Adrenal gland (tissue), 19 donors: ENCODE measurements at regions of chr11 and their contacts with region 1.

Region 1: DNA sequence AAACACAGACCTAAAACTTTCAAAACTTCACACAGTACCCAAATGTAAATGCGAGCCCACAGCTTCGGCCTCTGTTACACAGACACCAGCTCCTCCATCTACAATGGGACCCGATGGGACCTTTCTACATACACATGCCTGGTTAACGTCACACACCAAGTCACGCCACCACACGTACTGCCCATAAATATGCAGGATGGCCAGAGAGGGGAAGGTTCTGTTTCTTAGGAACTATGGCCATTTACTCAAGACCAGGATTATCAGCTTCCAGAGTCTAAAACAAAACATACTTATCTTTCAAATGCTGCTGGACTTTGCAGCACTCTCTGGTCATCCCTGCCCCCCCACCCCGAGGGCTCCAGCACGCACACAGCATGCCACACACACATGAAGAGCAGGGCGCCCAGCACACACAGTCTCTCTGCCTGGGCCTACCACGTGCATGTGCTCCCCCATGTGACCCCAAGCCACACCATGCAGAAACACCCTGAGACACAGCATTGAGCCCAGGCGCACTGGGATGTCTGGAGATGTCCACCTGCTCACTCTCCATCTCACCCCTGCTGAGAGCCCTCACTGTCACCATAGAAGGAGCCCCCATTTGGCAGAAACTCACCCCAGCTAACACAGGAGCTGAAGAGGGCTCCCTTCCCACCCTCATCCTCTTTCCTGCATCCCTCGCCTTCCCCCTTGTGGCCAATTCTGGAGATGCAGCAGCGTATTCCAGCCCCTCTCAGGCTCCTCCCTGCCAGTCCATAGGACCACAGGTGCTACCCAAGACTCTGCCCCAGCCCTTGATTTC is 61.8 kb downstream of the SLC22A12 start:
- DNase-seq: peak; percentile 69 to 90 (median 82)
- H3K4me3 ChIP-seq: no peak overlapping the region
- H3K27ac ChIP-seq: no peak overlapping the region
- H3K4me1 ChIP-seq: no peaks in the 10 kb centered on the region
- H3K27me3 ChIP-seq: no peaks in the 10 kb centered on the region
- CTCF ChIP-seq: peak; percentile 86 to 96 (median 92)
- POLR2A ChIP-seq: no peak

Region 2: DNA sequence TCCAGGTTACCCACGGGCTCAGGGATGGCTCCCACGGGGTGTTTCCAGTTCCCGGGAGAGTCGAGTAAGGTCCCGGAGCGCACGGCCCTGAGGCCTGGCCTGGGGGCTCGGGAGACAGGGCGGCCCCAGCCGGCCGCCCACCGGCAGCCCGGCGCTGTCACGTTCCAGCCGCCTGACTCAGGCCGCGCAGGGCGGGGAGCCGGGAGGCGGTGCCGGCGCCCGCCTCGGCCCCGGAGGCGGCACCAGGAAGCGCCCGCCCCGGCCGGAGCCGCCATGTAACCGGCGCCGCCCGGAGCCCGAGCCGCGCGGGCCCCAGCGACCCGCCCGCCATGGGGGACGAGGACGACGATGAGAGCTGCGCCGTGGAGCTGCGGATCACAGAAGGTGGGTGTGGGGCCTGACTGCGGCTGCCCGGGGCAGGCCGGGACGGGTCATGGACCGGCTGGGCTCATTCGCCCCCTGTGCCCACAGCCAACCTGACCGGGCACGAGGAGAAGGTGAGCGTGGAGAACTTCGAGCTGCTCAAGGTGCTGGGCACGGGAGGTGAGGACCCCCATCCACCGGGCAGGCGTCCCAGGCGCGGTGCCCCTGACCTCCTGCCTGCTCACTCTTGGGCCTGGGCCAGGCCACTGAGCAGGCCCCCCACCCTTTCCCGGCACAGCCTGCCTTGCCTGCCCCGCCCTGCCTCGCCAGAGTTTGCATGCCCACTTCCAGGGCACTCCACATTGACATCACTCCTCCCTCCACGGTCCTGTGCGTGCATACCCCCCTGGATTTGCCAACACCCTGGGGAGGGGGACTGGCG is 293.7 kb before region 1 on chr11 and contains the start of gene RPS6KA4:
- intact Hi-C with region 1: loop called (anchors 10 kb)
- DNase-seq: peak in 4 of 7 donors; percentile 58 to 68 (median 64)
- H3K4me3 ChIP-seq: peak within 1 kb of the TSS; percentile 5 to 97 (median 50)
- H3K27ac ChIP-seq: peak within 1 kb of the TSS; percentile 13 to 88 (median 82)
- H3K4me1 ChIP-seq: peaks cover 14 to 35% of the 10 kb centered on the region in 2 donors
- H3K27me3 ChIP-seq: no peaks in the 10 kb centered on the region
- CTCF ChIP-seq: peak in 1 of 6 experiments; percentile 17
- POLR2A ChIP-seq: peak; percentile 21 to 70
- total RNA-seq, gene RPS6KA4: 13.4 to 89.3 (median 26.3) TPM

Region 3: GRCh38 chr11:64448599-64449556 is 203.9 kb before region 1 on chr11:
- intact Hi-C with region 1: loop called in 1 of 2 experiments (anchors 10 kb)
- DNase-seq: peak; percentile 81 to 90 (median 86)
- H3K4me3 ChIP-seq: peak overlapping the region in 1 of 4 donors; percentile 39
- H3K27ac ChIP-seq: peak overlapping the region in 2 of 5 donors; percentile 48 to 74
- H3K4me1 ChIP-seq: peaks cover 3 to 17% of the 10 kb centered on the region in 2 donors
- H3K27me3 ChIP-seq: no peaks in the 10 kb centered on the region
- CTCF ChIP-seq: peak; percentile 66 to 85 (median 76)
- POLR2A ChIP-seq: no peak

Region 4: GRCh38 chr11:64489831-64490441 is 162.9 kb before region 1 on chr11:
- intact Hi-C with region 1: loop called (anchors 2 to 10 kb)
- DNase-seq: peak; percentile 66 to 77 (median 72)
- H3K4me3 ChIP-seq: no peak overlapping the region
- H3K27ac ChIP-seq: no peak overlapping the region
- H3K4me1 ChIP-seq: no peaks in the 10 kb centered on the region
- H3K27me3 ChIP-seq: peaks cover 21% of the 10 kb centered on the region
- CTCF ChIP-seq: peak; percentile 36 to 76 (median 58)
- POLR2A ChIP-seq: no peak

Region 5: DNA sequence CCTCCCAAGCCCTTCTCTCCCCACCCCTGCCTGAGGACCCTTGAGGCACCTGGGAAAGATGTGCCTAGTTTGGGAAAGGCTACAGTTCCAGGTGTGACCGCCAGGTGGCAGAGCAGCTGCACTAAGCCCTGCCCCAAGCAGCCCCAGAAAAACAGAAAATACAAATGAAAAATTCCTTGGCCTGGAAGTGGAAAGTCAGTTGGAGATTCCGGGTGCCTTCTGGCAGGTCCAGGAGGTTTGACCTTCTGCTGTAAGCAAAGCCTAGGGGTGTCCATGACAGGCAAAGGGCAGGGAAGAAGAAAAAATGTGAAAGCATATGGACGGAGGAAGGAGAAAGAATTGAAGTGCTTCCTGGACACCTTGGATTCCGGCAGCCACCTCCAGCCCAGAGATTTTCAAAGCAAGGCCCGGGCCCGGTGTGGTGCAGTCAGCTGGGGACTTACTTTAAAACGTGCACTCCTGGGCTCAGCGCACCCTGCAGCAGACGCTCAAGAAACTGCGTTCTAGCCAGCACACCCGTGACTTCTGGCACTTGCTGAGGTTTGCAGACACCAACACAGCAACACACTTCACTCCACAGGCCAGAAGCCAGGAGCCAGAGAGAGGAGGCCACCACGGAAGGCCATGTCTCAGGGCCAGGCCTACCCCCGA is 99.1 kb before region 1 on chr11:
- intact Hi-C with region 1: loop called (anchors 2 kb)
- DNase-seq: peak; percentile 40 to 86 (median 75)
- H3K4me3 ChIP-seq: no peak overlapping the region
- H3K27ac ChIP-seq: peak overlapping the region in 3 of 5 donors; percentile 36 to 73 (median 63)
- H3K4me1 ChIP-seq: peaks cover 2 to 18% of the 10 kb centered on the region in 2 donors
- H3K27me3 ChIP-seq: peaks cover 4% of the 10 kb centered on the region
- CTCF ChIP-seq: peak; percentile 95 to 99 (median 98)
- POLR2A ChIP-seq: no peak

Region 6: GRCh38 chr11:64638018-64638665 is 14.6 kb before region 1 on chr11:
- intact Hi-C with region 1: no loop called
- DNase-seq: peak in 1 of 7 donors; percentile 63
- H3K4me3 ChIP-seq: peak overlapping the region in 1 of 4 donors; percentile 15
- H3K27ac ChIP-seq: peak overlapping the region in 1 of 5 donors; percentile 30
- H3K4me1 ChIP-seq: no peaks in the 10 kb centered on the region
- H3K27me3 ChIP-seq: peaks cover 7% of the 10 kb centered on the region
- CTCF ChIP-seq: no peak
- POLR2A ChIP-seq: no peak

Region 7: GRCh38 chr11:64868904-64869570 is 216.2 kb after region 1 on chr11:
- intact Hi-C with region 1: no loop called
- DNase-seq: no peak
- H3K4me3 ChIP-seq: no peak overlapping the region
- H3K27ac ChIP-seq: peak overlapping the region in 2 of 5 donors; percentile 68 to 76
- H3K4me1 ChIP-seq: peaks cover 23 to 57% of the 10 kb centered on the region in 2 donors
- H3K27me3 ChIP-seq: no peaks in the 10 kb centered on the region
- CTCF ChIP-seq: no peak
- POLR2A ChIP-seq: no peak